IMR-90 (cell line): ENCODE measurements at regions of chr17 and their contacts with region 1.

Region 1: GRCh38 chr17:49290690-49291359 is 60.2 kb upstream of the PHOSPHO1 start:
- DNase-seq: peak; percentile 42
- ATAC-seq: peak; percentile 72; the same call in 1 of the 2 replicates
- H3K4me3 ChIP-seq: no peak overlapping the region
- H3K27ac ChIP-seq: no peak overlapping the region
- H3K4me1 ChIP-seq: no peaks in the 10 kb centered on the region
- H3K27me3 ChIP-seq: no peaks in the 10 kb centered on the region
- CTCF ChIP-seq: peak; percentile 72
- POLR2A ChIP-seq: no peak
- RAD21 ChIP-seq: peak; percentile 63

Region 2: GRCh38 chr17:49260011-49260921 is 30.6 kb before region 1 on chr17:
- CTCF ChIA-PET with region 1: interaction called, 11 read pairs
- POLR2A ChIA-PET with region 1: no interaction called
- dilution Hi-C with region 1: no loop called
- in situ Hi-C with region 1: no loop called
- intact Hi-C with region 1: no loop called
- DNase-seq: peak; percentile 82
- ATAC-seq: peak; percentile 84
- H3K4me3 ChIP-seq: peak overlapping the region; percentile 46
- H3K27ac ChIP-seq: peak overlapping the region; percentile 33; the same call in 1 of the 2 replicates
- H3K4me1 ChIP-seq: peaks cover 2% of the 10 kb centered on the region; the same call in 1 of the 2 replicates
- H3K27me3 ChIP-seq: no peaks in the 10 kb centered on the region
- CTCF ChIP-seq: no peak
- POLR2A ChIP-seq: peak; percentile 63
- RAD21 ChIP-seq: no peak

Region 3: DNA sequence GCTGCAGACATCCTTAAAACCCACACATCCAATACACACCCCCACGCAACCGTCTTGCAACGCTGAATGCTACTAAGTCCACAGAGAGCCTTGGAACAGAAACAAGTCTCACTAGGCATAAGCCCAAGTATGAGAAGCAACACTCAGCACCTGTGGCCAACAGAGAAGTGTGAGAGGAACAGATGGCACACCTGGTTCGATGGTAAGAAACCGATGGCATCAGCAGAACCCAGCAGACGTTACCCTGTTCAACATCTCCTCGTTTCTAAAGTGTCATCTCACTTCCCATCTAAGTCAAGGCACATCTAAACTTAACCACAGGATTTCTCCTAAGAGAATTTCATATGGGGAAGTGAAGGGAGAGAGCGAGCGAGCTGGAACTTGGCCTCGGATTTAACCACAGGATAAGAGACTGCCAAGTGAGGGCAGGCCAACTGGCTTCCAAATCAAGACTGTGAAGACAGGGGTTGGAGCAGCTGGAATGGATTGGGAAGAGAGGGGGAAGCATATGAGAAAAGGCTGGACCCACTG is 325.8 kb after region 1 on chr17:
- CTCF ChIA-PET with region 1: no interaction called
- POLR2A ChIA-PET with region 1: no interaction called
- dilution Hi-C with region 1: no loop called
- in situ Hi-C with region 1: no loop called
- intact Hi-C with region 1: no loop called
- DNase-seq: no peak
- ATAC-seq: no peak
- H3K4me3 ChIP-seq: no peak overlapping the region
- H3K27ac ChIP-seq: no peak overlapping the region
- H3K4me1 ChIP-seq: peaks cover 6% of the 10 kb centered on the region; the same call in 1 of the 2 replicates
- H3K27me3 ChIP-seq: no peaks in the 10 kb centered on the region
- CTCF ChIP-seq: no peak
- POLR2A ChIP-seq: no peak
- RAD21 ChIP-seq: no peak